H1 (cell line): ENCODE measurements at regions of chr18 and their contacts with region 1.

Region 1: DNA sequence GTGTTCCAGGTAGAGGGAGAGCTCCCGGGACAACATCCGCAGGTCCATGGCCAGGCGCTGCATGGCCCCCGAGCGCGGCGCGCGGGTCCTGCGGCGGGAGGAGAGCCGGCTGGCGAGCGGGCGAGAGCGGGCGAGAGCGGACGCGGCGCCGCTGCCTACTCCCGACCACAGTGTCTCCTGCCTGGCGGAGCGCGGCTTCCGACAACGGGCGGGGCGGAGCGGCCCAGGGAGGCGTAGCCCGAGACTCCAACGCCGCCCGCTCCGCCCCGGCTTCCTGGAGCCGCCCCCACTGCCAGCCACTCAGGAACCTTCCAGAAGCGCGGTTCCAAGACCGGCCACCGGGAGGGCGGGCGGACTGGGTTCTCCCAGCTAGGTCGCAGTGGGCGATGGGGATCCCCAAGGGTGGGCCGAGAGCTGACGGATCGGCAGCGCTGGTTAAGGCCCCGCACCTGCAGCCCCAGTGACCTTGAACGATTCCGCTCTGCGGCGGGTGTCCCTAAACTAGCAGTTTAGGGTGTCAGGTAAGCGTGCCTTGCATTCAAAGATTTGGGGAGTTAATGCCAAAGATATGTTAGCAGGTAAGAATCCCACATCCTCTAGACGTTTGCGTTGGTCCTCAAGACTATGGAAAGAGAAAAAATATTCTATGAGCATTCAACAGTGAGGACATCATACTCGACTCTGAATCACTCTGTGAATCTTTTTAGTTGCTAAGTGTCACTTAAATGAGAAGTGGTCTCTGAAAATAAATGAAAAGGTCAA is at the start of gene ABHD3:
- DNase-seq: peak; percentile 76 to 93
- H3K4me3 ChIP-seq: peak within 1 kb of the TSS; percentile 57 to 79 (median 74)
- H3K27ac ChIP-seq: peak within 1 kb of the TSS; percentile 62; the same call in 1 of the 2 replicates
- H3K4me1 ChIP-seq: peaks cover 0 to 3% (median 1%) of the 10 kb centered on the region in 4 experiments; a peak in 1 of 7 replicates
- H3K27me3 ChIP-seq: peaks cover 0 to 3% (median 0%) of the 10 kb centered on the region in 4 experiments; a peak in 4 of 7 replicates
- CTCF ChIP-seq: peak in 1 of 3 experiments; percentile 18; a peak in 1 of 4 replicates
- EP300 ChIP-seq: peak in 1 of 2 experiments; percentile 47; a peak in 1 of 3 replicates
- POLR2A ChIP-seq: peak; percentile 84 to 90
- RAD21 ChIP-seq: peak in 1 of 2 experiments; percentile 33; a peak in 1 of 4 replicates
- total RNA-seq, gene ABHD3: 9.0 and 12.1 TPM in 2 replicates

Region 2: DNA sequence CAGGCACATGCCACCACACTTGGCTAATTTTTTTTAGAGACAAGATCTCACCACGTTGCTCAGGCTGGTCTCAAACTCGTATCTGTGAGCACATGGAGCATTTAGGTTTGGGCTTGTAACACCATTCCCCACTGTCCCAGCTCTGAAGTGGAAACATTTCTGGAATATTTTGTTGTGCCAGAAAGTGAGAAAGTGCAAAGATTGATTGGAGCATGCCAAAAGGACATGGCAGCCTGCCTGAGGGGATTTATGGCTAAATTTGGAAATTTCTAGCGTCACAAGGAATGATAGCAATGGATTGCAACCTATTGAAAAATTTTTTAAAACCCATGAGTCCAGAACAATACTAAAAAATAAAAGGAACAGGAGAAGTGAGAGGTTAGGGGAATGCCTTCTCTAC is 241.1 kb before region 1 on chr18:
- CTCF ChIA-PET with region 1: no interaction called
- POLR2A ChIA-PET with region 1: no interaction called
- DNase-seq: no peak
- H3K4me3 ChIP-seq: no peak overlapping the region
- H3K27ac ChIP-seq: no peak overlapping the region
- H3K4me1 ChIP-seq: no peaks in the 10 kb centered on the region
- H3K27me3 ChIP-seq: no peaks in the 10 kb centered on the region
- CTCF ChIP-seq: no peak
- EP300 ChIP-seq: no peak
- POLR2A ChIP-seq: no peak
- RAD21 ChIP-seq: no peak

Region 3: DNA sequence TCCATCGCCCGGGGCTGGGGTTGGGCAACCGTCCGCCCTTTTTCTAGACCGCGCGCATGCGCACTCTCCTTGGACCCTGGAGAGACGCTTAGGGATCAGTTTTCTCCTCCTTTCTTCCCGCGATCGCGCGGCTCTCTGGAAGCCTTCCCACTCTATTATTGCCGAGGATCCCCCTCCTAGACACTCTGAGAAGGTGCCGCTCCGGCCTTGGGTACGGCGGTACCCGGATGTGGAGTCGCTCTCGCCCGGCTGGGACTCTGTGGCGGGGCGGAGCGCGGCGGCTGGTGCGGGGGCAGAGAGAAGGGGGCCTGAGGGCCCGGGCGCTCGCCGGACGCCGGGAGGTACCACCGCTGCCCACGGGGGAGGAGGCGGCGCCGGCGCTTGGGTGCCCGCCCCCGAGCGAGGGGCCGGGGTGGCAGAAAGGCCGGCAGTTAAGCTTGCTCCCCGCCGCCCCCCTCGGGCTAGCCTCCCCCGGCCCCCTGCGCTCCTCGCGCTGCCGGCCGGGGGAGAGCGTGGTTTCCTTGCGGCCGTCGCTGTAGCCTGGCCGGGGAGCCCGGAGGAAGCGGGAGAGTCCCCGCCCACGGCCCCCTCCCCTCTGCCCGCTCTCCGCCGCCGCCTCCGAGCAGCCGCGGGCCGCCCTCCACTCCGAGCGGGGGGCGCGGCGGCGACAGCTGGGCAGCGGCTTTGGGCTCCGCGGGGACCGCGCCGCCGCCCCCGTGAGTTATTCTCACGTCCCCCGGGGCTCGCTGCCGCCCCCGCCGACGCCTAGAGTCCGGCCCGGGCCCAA is 36.1 kb after region 1 on chr18 and contains the start of gene MIB1:
- CTCF ChIA-PET with region 1: interaction called, 3 read pairs
- POLR2A ChIA-PET with region 1: interaction called, 19 read pairs
- DNase-seq: peak in 1 of 2 experiments; percentile 99
- H3K4me3 ChIP-seq: peak within 1 kb of the TSS; percentile 83 to 94 (median 88)
- H3K27ac ChIP-seq: peak within 1 kb of the TSS; percentile 91
- H3K4me1 ChIP-seq: peaks cover under 1 to 6% (median 4%) of the 10 kb centered on the region in 4 experiments; a peak in 5 of 7 replicates
- H3K27me3 ChIP-seq: no peaks in the 10 kb centered on the region
- CTCF ChIP-seq: no peak
- EP300 ChIP-seq: no peak
- POLR2A ChIP-seq: peak; percentile 74 to 75
- RAD21 ChIP-seq: no peak
- total RNA-seq, gene MIB1: 57.2 and 60.3 TPM in 2 replicates

Region 4: GRCh38 chr18:21980744-21981143 is 276.0 kb after region 1 on chr18:
- CTCF ChIA-PET with region 1: no interaction called
- POLR2A ChIA-PET with region 1: no interaction called
- DNase-seq: no peak
- H3K4me3 ChIP-seq: no peak overlapping the region
- H3K27ac ChIP-seq: no peak overlapping the region
- H3K4me1 ChIP-seq: peaks cover 3 to 4% (median 3%) of the 10 kb centered on the region in 4 experiments; a peak in 5 of 7 replicates
- H3K27me3 ChIP-seq: no peaks in the 10 kb centered on the region
- CTCF ChIP-seq: no peak
- EP300 ChIP-seq: no peak
- POLR2A ChIP-seq: no peak
- RAD21 ChIP-seq: no peak